Activated CD4-positive, alpha-beta T cell treated with anti-CD3 and anti-CD28 coated beads, Interleukin-2, amount 10 ng/mL, durations not matched to agents 24 days and 14 days (primary cell): ENCODE measurements at regions of chr22 and their contacts with region 1.

Region 1: DNA sequence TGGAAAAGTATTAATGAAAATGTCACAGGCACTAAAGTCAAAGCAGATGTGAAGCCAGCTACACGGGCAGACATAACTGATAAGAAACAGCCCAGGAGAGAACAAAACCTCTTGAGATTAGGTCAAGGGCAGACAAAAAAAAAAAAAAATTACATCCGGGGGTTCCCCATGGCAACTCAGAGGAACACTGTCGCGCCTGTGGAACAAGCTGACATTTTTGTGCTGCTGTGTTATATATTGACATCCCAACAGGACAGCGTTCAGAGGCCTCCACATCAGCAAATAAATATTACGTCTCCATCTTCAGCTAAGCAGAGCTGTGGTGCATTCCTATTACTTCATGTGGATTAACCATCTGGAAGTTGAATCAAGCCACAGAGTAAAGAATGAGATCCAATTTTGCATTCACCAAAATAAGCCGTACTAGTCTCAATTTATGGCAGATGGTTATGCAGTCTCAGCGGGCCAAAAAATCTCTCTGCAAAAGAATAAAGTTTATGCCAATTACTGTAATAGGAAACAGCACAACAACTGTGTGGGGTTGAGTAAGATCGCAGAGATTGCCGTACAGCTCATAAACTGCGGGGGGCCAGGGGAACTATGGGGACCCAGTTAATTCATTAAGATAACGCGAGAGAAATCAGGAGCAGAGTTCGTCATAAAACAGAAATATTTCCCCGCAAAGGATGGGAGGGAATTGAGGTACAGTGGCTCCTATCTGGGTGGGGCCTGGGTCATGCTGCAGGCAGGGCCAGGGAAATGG is 41.3 kb upstream of the MN1 start:
- DNase-seq: no peak
- H3K4me3 Mint-ChIP-seq: no peak overlapping the region
- H3K27ac Mint-ChIP-seq: no peak overlapping the region
- H3K4me1 Mint-ChIP-seq: no peaks in the 10 kb centered on the region
- H3K27me3 Mint-ChIP-seq: no peaks in the 10 kb centered on the region

Region 2: GRCh38 chr22:27780161-27780575 is 62.7 kb before region 1 on chr22:
- intact Hi-C with region 1: loop called (anchors 10 kb)
- DNase-seq: no peak
- H3K4me3 Mint-ChIP-seq: no peak overlapping the region
- H3K27ac Mint-ChIP-seq: no peak overlapping the region
- H3K4me1 Mint-ChIP-seq: no peaks in the 10 kb centered on the region
- H3K27me3 Mint-ChIP-seq: peaks cover 8% of the 10 kb centered on the region